AG04449 (cell line): ENCODE measurements at regions of chr6 and their contacts with region 1.

Region 1: DNA sequence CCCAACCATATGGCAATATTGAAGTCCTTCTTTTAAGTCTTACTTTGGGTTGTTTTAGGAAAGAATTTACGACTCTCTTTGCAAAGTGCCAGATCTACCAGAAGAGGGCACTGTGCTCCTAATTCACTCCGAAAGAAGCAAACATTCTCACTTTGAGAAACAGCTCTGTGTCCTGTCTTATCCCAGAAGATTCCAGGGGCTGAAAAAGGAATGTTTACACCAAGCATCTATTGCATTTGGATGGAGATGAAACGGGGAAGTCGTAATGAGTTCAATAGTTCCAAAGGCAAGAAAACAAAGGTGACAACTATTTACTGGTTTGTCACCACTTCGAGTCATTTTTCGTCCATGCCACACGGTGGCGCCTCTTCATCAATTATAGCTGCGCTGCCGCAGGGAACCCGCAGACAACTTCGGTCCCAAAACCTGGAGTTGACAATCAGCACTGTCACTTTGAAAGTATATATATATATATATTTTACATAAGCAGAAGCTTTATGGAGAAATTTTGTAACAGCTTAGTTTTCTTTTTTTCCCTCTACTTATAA is 121.6 kb downstream of the MOXD1 start:
- DNase-seq: no peak
- H3K4me3 ChIP-seq: peak overlapping the region; percentile 56
- CTCF ChIP-seq: peak; percentile 62

Region 2: DNA sequence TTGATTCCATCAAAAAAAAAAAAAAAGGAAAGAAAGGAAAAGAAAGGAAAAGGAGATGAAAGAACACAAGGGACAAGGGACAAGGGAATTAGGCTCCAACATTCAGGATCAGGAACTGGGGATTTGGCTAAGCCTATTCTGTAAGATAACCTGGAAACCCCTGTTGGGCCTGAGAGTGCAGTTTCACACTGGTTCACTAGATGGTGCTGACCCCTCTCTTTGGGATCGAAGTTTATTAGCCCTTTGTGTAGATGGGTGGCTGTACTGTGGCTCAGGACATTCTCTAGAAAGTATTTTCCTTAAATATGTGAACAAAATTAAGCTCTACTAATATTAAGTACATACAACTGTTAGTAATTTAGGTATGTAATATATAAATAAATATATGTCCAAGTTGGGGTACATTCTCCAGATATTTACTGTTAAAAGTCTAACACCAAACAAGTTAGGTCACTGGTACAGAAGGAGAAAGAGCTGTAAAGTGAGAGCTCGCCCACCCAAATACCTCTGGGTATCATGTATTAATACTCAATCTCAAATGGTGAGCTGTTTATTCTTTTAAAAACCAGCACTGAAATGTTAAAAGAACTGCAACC is 584.7 kb before region 1 on chr6:
- CTCF ChIA-PET with region 1: interaction called, 12 read pairs
- POLR2A ChIA-PET with region 1: no interaction called
- DNase-seq: no peak
- H3K4me3 ChIP-seq: no peak overlapping the region
- CTCF ChIP-seq: peak; percentile 91

Region 3: DNA sequence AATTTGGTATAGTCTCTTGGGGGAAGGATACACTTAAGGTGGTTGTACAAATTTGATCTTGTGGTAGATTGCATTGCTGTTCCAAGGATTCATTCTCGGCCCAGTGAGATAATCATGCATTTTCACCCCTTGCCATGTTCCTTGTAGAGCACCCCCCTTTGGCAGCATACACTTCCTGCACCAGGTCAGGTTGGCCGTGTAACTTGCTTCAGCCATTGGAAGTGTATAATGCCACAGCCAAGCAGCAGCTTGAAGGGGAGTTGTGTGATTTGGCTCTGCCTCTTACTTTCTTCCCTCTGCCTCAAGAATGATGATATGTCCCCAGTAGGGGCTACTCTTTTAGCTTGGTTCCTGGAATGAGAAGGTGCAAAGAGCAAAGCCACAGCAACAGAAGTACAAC is 350.4 kb before region 1 on chr6:
- CTCF ChIA-PET with region 1: interaction called, 166 read pairs
- POLR2A ChIA-PET with region 1: no interaction called
- DNase-seq: no peak
- H3K4me3 ChIP-seq: no peak overlapping the region
- CTCF ChIP-seq: no peak

Region 4: DNA sequence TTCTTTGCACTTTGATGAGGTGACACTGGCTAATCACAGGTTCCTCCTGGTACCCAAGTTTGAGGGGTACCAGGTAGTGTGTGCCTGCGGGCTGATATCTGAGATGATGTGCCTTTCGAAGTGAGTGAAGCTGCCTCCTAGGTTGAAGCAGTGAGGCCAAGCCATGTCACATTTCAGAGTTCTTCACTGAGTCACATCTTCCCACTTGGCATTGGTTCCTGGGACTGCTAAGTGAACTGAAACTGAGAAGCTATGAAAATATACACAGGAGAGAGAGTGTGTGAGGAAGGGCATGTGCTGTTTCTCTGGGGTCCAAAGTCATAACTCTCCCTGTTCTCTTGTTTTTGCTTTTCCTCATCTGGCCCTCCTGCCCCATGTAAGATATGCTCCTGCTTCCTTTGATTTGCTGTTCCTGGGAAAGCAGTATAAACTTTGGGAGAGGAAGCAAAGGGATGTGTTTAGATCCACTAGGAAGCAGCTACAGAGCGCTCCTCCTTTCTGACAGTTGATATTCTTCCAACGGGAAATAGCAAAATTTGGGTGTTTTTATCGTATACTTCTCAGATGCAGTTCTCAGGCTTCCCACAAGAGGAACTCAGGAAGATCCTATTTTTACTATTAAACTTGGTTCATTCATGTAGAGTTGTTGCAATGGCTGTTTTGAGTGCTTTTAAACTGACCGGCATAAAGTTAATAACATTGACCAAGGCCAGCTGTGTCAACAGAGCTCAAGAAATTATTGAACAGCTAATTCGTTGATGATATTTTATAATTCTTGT is 32.1 kb before region 1 on chr6:
- CTCF ChIA-PET with region 1: interaction called, 35 read pairs
- POLR2A ChIA-PET with region 1: no interaction called
- DNase-seq: no peak
- H3K4me3 ChIP-seq: no peak overlapping the region
- CTCF ChIP-seq: no peak

Region 5: GRCh38 chr6:132330779-132331178 is 51.1 kb after region 1 on chr6:
- CTCF ChIA-PET with region 1: interaction called, 11 read pairs
- POLR2A ChIA-PET with region 1: no interaction called
- DNase-seq: no peak
- H3K4me3 ChIP-seq: no peak overlapping the region
- CTCF ChIP-seq: no peak

Region 6: GRCh38 chr6:132456700-132457143 is 177.1 kb after region 1 on chr6:
- CTCF ChIA-PET with region 1: interaction called, 12 read pairs
- POLR2A ChIA-PET with region 1: no interaction called
- DNase-seq: no peak
- H3K4me3 ChIP-seq: no peak overlapping the region
- CTCF ChIP-seq: no peak

Region 7: DNA sequence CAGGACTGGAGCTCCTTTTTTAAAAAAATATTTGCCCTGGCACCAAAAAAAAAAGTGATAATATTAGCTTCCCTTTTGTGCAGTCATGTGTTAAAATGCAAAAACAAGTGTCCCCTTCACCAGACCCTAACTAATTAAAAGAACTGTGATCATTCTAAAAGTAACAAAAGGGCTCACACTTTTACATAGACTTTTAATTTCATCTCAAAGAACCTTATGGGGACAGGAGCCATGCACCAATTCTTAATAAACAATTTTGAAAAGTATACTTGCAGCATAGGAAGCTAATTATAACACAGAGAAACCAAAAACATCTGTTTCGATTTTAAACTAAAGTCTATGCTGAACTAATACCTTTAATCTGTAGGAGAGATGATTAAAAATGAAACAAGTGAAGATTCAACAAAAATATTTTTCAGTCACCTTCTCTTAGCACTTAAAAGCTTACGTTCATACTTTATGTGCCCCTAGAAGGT is 216.0 kb after region 1 on chr6:
- CTCF ChIA-PET with region 1: interaction called, 326 read pairs
- POLR2A ChIA-PET with region 1: no interaction called
- DNase-seq: no peak
- H3K4me3 ChIP-seq: no peak overlapping the region
- CTCF ChIP-seq: no peak